AG04449 (cell line): ENCODE measurements at regions of chr7 and their contacts with region 1.

Region 1: DNA sequence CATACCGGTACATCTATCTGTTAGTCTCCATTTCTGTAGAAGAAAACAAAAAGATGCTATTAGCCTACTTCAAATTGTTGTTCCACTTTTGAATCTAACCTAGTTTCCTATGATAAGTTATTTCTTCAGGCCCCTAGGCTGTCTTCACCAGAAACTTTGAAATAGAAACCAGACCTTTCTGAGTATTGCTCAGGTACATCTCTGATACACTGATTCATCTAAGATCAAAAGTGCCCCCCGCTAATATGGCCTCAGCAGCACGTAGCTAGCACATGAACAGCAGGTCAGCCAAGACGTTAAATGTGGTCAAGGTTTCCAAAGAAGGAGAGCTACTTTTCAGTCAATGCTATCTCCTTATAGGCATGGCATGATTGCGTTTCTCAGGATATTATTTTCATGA is 23.6 kb downstream of the CTAGE6 start:
- DNase-seq: no peak
- H3K4me3 ChIP-seq: no peak overlapping the region
- CTCF ChIP-seq: no peak

Region 2: GRCh38 chr7:143510854-143511592 is 222.9 kb before region 1 on chr7:
- CTCF ChIA-PET with region 1: no interaction called
- POLR2A ChIA-PET with region 1: no interaction called
- DNase-seq: no peak
- H3K4me3 ChIP-seq: peak overlapping the region; percentile 19; the same call in 1 of the 2 replicates
- CTCF ChIP-seq: no peak

Region 3: GRCh38 chr7:144011458-144012230 is 277.8 kb after region 1 on chr7:
- CTCF ChIA-PET with region 1: interaction called, 20 read pairs
- POLR2A ChIA-PET with region 1: no interaction called
- DNase-seq: peak; percentile 10
- H3K4me3 ChIP-seq: no peak overlapping the region
- CTCF ChIP-seq: peak; percentile 15

Region 4: DNA sequence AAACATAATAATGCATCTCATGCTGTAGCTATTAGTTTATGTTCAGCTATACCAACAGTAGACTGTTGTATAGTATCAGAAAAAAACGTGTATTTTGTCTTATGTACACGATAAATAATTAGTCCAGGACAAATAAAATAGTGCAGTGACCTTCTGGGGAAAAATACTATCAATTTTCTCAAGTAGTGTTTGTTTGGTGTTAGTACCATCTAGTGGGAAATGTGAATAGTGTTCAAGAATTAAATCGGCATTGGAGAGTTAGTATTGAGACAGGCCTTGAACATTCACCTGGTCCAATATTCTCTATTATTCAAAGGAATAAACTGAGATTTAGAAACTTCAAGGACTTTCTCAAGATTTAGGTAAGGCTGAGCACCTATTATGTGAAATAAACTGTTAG is 293.2 kb after region 1 on chr7:
- CTCF ChIA-PET with region 1: interaction called, 25 read pairs
- POLR2A ChIA-PET with region 1: interaction called, 3 read pairs
- DNase-seq: no peak
- H3K4me3 ChIP-seq: no peak overlapping the region
- CTCF ChIP-seq: peak; percentile 22

Region 5: DNA sequence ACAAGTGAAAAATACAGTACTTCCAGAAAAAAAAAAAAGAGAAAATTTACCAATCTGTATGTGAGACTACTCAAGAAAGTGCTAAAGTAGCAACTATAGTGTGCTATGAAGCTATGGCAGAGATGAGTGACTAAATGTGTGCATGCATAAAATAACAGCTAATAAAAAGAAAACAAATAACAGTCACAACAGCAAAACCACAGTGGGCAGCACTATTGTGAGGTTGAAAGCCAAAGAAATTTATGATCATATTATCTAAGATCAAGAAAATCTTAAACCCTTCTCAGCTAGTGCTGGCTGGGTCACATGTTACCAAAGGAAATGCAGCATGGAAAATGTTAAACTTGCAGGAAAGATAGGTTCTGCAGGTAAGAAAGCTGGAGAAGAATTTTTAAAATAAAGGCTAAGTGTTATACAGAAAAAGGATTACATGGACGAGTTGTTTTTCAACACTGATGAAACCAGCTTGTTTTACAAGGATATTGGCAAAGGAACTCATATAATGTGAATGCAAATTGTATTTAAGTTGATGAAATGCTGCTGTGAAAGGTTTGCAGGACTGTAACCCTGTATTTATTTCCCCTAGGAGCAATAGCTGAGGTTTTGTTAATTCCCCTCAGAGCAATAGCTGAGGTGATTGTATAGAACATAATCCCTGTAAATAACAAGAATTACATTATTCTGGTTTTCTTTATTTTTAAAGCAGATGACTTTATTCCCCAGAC is 299.3 kb after region 1 on chr7:
- CTCF ChIA-PET with region 1: interaction called, 25 read pairs
- POLR2A ChIA-PET with region 1: no interaction called
- DNase-seq: no peak
- H3K4me3 ChIP-seq: no peak overlapping the region
- CTCF ChIP-seq: no peak

Region 6: GRCh38 chr7:144127703-144128334 is 393.9 kb after region 1 on chr7:
- CTCF ChIA-PET with region 1: interaction called, 12 read pairs
- POLR2A ChIA-PET with region 1: no interaction called
- DNase-seq: peak; percentile 14
- H3K4me3 ChIP-seq: no peak overlapping the region
- CTCF ChIP-seq: peak; percentile 88